ENCODE measurements at regions of chr2 and their contacts with region 1.

Region 1: GRCh38 chr2:217988014-217988839 is 14.6 kb downstream of the TNS1 start:
- DNase-seq: peak; percentile 86 to 91 (median 88)
- ATAC-seq: peak; percentile 90 to 92 (median 90)
- H3K4me3 ChIP-seq: peak overlapping the region in 3 of 12 donors; percentile 7 to 37 (median 22)
- H3K27ac ChIP-seq: peak overlapping the region; percentile 48 to 91 (median 83)
- H3K4me1 ChIP-seq: peaks cover 4 to 41% (median 29%) of the 10 kb centered on the region in 12 donors
- H3K27me3 ChIP-seq: no peaks in the 10 kb centered on the region
- CTCF ChIP-seq: peak; percentile 78 to 94 (median 91)
- POLR2A ChIP-seq: no peak

Region 2: GRCh38 chr2:217713395-217714286 is 274.6 kb before region 1 on chr2:
- intact Hi-C with region 1: no loop called
- DNase-seq: peak; percentile 76 to 88 (median 82)
- ATAC-seq: peak; percentile 42 to 82 (median 77)
- H3K4me3 ChIP-seq: no peak overlapping the region
- H3K27ac ChIP-seq: peak overlapping the region in 11 of 12 donors; percentile 35 to 74 (median 58)
- H3K4me1 ChIP-seq: peaks cover 0 to 28% (median 17%) of the 10 kb centered on the region in 12 donors
- H3K27me3 ChIP-seq: no peaks in the 10 kb centered on the region
- CTCF ChIP-seq: peak; percentile 90 to 99 (median 97)
- POLR2A ChIP-seq: no peak

Region 3: DNA sequence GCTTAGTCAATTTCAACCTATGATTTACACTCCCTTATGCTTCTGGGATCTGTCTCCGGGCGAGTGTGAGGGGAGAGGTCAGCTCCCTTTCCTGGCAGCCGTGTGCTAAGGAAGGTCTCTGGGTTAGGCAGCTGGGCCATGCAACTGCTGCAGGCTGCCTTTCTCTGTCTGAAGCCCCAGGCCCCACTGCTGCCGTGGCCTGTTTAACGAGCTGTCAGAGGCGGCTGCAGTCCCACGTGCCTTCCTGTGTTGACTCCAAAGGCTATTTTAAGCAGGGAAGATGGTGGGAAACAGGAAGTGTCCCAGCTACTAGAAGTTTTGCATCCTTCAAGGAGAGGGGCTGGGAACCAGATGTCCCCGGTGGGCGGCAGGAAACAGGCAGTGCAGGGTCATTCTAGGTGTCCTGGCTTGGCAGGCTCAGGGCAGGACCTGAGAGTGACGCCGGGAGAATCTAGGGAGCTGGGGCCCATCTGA is 171.8 kb before region 1 on chr2:
- intact Hi-C with region 1: no loop called
- DNase-seq: peak; percentile 66 to 84 (median 79)
- ATAC-seq: peak; percentile 43 to 85 (median 52)
- H3K4me3 ChIP-seq: no peak overlapping the region
- H3K27ac ChIP-seq: peak overlapping the region; percentile 62 to 75 (median 68)
- H3K4me1 ChIP-seq: peaks cover 4 to 98% (median 82%) of the 10 kb centered on the region in 12 donors
- H3K27me3 ChIP-seq: no peaks in the 10 kb centered on the region
- CTCF ChIP-seq: no peak
- POLR2A ChIP-seq: no peak

Region 4: GRCh38 chr2:217886720-217887309 is 101.4 kb before region 1 on chr2:
- intact Hi-C with region 1: loop called (anchors 1 to 5 kb)
- DNase-seq: peak; percentile 74 to 82 (median 79)
- ATAC-seq: peak in 3 of 4 donors; percentile 9 to 41 (median 33)
- H3K4me3 ChIP-seq: no peak overlapping the region
- H3K27ac ChIP-seq: peak overlapping the region in 9 of 12 donors; percentile 19 to 79 (median 65)
- H3K4me1 ChIP-seq: peaks cover 8 to 72% (median 52%) of the 10 kb centered on the region in 12 donors
- H3K27me3 ChIP-seq: no peaks in the 10 kb centered on the region
- CTCF ChIP-seq: peak; percentile 70 to 90 (median 79)
- POLR2A ChIP-seq: no peak

Region 5: DNA sequence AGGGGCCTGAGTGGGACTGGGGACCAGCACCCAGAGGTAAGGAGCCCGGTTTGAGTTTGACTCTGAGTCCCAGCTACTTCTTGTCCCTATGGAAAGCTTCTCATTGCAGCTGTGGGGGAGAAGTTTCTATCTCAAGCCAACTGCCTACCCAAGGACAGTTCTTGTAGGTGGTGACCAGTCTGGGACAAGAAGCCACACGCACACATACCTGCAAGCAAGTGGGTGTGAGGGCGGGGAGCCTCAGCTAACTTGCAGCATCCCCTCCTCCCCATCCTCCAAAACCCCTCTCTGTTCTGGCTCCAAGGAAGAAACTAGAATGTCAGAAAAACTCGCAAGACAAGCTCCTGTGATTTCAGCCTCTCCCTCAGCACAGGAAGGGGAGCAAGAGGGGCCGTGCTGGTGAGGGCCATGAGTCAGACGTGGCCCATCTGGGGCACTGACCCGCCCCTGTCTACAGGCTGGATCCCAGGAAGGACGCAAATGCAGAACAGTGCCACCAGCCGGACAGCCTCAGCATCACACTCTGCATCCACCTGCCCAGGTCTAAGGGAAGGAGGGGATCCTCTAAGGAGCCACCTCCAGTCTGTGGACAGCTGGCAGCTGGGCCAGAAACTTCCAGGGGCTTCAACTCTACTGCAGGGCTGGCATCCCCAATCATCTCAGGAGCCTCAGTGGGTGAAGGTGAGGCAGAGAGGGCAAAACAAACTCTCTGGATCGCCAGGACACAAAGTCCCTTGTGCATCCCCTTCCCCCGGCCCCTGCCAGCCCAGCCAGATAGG is 88.8 kb before region 1 on chr2:
- intact Hi-C with region 1: loop called in 5 of 10 experiments (anchors 5 kb)
- DNase-seq: peak in 3 of 5 donors; percentile 64 to 89 (median 80)
- ATAC-seq: peak; percentile 3 to 45 (median 24)
- H3K4me3 ChIP-seq: peak overlapping the region in 1 of 12 donors; percentile 27
- H3K27ac ChIP-seq: peak overlapping the region; percentile 85 to 99 (median 94)
- H3K4me1 ChIP-seq: peaks cover 21 to 78% (median 73%) of the 10 kb centered on the region in 12 donors
- H3K27me3 ChIP-seq: no peaks in the 10 kb centered on the region
- CTCF ChIP-seq: peak; percentile 41 to 69 (median 58)
- POLR2A ChIP-seq: no peak

Region 6: DNA sequence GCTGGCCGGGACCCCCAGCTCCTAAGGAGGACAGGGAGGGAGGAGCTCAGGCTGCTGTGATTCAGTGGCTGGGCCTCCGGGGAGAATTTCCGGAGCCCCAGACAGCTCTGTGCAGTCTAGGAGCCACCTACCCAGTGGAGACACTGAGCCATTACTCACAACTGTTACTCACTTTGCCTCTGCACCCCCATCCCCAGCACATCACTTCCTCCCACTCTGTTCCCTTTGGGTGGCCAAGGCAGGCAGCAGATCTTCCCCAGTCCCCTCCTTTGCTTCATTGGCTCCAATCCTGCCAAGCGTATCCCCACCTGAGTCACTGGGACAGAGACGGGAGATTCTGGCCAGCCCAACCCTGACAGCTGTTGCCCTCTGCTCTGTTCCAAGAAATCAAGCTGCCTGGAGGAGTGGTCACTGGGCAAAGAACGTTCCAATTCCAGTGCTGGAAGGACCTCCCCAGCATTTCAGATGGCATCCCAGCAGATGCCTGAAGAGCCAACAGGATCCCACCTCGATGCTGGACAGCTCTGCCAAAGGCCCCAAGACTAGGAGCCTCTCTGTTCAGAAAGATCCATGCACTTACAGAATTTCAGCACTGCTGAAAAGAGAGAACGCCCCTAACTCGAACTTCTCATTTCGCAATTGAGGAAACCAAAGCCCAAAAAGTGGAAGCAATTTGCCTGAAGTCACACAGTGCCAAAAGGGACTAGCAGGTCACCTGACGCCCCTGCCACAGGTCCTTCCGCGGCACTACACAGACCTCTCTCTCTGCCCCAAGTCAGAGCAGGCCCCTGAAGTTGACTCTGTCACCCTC is 53.7 kb before region 1 on chr2:
- intact Hi-C with region 1: loop called in 1 of 10 experiments (anchors 10 kb)
- DNase-seq: peak in 4 of 5 donors; percentile 67 to 90 (median 74)
- ATAC-seq: peak; percentile 8 to 62 (median 40)
- H3K4me3 ChIP-seq: peak overlapping the region in 10 of 12 donors; percentile 2 to 95 (median 28)
- H3K27ac ChIP-seq: peak overlapping the region; percentile 92 to 99 (median 96)
- H3K4me1 ChIP-seq: peaks cover 37 to 100% (median 99%) of the 10 kb centered on the region in 12 donors
- H3K27me3 ChIP-seq: no peaks in the 10 kb centered on the region
- CTCF ChIP-seq: no peak
- POLR2A ChIP-seq: no peak

Region 7: GRCh38 chr2:217943446-217944389 is 44.5 kb before region 1 on chr2:
- intact Hi-C with region 1: loop called (anchors 1 to 10 kb)
- DNase-seq: peak; percentile 91 to 94 (median 92)
- ATAC-seq: peak; percentile 87 to 90 (median 90)
- H3K4me3 ChIP-seq: peak overlapping the region; percentile 56 to 95 (median 82)
- H3K27ac ChIP-seq: peak overlapping the region; percentile 92 to 99 (median 96)
- H3K4me1 ChIP-seq: peaks cover 8 to 82% (median 65%) of the 10 kb centered on the region in 12 donors
- H3K27me3 ChIP-seq: no peaks in the 10 kb centered on the region
- CTCF ChIP-seq: peak; percentile 24 to 67 (median 52)
- POLR2A ChIP-seq: peak; percentile 64 to 96

Region 8: GRCh38 chr2:217953531-217953932 is 34.7 kb before region 1 on chr2:
- intact Hi-C with region 1: loop called in 1 of 10 experiments (anchors 5 kb)
- DNase-seq: peak in 3 of 5 donors; percentile 41 to 65 (median 51)
- ATAC-seq: peak; percentile 27 to 65 (median 50)
- H3K4me3 ChIP-seq: no peak overlapping the region
- H3K27ac ChIP-seq: peak overlapping the region; percentile 57 to 97 (median 84)
- H3K4me1 ChIP-seq: peaks cover 20 to 98% (median 77%) of the 10 kb centered on the region in 12 donors
- H3K27me3 ChIP-seq: no peaks in the 10 kb centered on the region
- CTCF ChIP-seq: peak in 5 of 12 donors; percentile 14 to 50 (median 38)
- POLR2A ChIP-seq: no peak

Region 9: GRCh38 chr2:218033590-218034496 is 45.6 kb after region 1 on chr2:
- intact Hi-C with region 1: loop called in 3 of 10 experiments (anchors 2 to 5 kb)
- DNase-seq: peak in 3 of 5 donors; percentile 21 to 61 (median 29)
- ATAC-seq: no peak
- H3K4me3 ChIP-seq: peak overlapping the region in 4 of 12 donors; percentile 27 to 49 (median 47)
- H3K27ac ChIP-seq: peak overlapping the region in 1 of 12 donors; percentile 42
- H3K4me1 ChIP-seq: peaks cover 0 to 18% (median 9%) of the 10 kb centered on the region in 12 donors
- H3K27me3 ChIP-seq: peaks cover 0 to 5% (median 0%) of the 10 kb centered on the region in 9 donors
- CTCF ChIP-seq: no peak
- POLR2A ChIP-seq: no peak

Measured in heart left ventricle (tissue), 16 donors.